GM12878 (cell line): ENCODE measurements at regions of chr4 and their contacts with region 1.

Region 1: GRCh38 chr4:147866532-147867271 is 134.8 kb downstream of the ARHGAP10 start:
- DNase-seq: peak; percentile 66
- ATAC-seq: peak; percentile 94
- H3K4me3 ChIP-seq: no peak overlapping the region
- H3K27ac ChIP-seq: no peak overlapping the region
- H3K4me1 ChIP-seq: 0 out of 2 replicates have a peak, but pooled peaks cover 2% of the 10 kb centered on the region
- H3K27me3 ChIP-seq: no peaks in the 10 kb centered on the region
- CTCF ChIP-seq: peak; percentile 92 to 100 (median 99); a peak in 5 of 6 replicates
- EP300 ChIP-seq: no peak
- POLR2A ChIP-seq: no peak
- RAD21 ChIP-seq: peak; percentile 100

Region 2: DNA sequence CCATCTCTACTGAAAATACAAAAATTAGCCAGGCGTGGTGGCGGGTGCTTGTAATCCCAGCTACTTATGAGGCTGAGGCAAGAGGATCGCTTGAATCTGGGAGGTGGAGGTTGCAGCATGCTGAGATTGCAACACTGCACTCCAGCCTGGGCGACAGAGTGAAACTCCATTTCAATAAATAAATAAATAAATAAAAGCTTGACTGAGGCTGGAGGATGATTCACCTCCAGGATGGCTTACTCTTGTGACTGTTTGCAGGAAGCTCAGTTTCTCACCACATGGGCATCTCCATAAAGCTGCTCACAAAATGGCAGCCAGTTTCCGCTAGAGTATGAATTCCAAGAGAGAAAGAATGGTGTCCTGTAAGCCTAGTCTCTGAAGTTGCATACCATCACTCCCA is 577.5 kb before region 1 on chr4:
- CTCF ChIA-PET with region 1: no interaction called
- POLR2A ChIA-PET with region 1: no interaction called
- RAD21 ChIA-PET with region 1: no interaction called
- SMC1A ChIA-PET with region 1: no interaction called
- in situ Hi-C with region 1: no loop called
- intact Hi-C with region 1: no loop called
- DNase-seq: no peak
- ATAC-seq: no peak
- H3K4me3 ChIP-seq: no peak overlapping the region
- H3K27ac ChIP-seq: no peak overlapping the region
- H3K4me1 ChIP-seq: no peaks in the 10 kb centered on the region
- H3K27me3 ChIP-seq: no peaks in the 10 kb centered on the region
- CTCF ChIP-seq: no peak
- EP300 ChIP-seq: no peak
- POLR2A ChIP-seq: no peak
- RAD21 ChIP-seq: no peak

Region 3: GRCh38 chr4:147617173-147617840 is 249.4 kb before region 1 on chr4 and contains the start of gene TMEM184C:
- CTCF ChIA-PET with region 1: interaction called, 64 read pairs
- POLR2A ChIA-PET with region 1: interaction called, 3 read pairs
- RAD21 ChIA-PET with region 1: interaction called, 40 read pairs
- SMC1A ChIA-PET with region 1: interaction called, 44 read pairs
- in situ Hi-C with region 1: no loop called
- intact Hi-C with region 1: loop called (anchors 1 kb)
- DNase-seq: peak; percentile 89
- ATAC-seq: peak; percentile 98
- H3K4me3 ChIP-seq: peak within 1 kb of the TSS; percentile 76
- H3K27ac ChIP-seq: peak within 1 kb of the TSS; percentile 90
- H3K4me1 ChIP-seq: no peaks in the 10 kb centered on the region
- H3K27me3 ChIP-seq: no peaks in the 10 kb centered on the region
- CTCF ChIP-seq: no peak
- EP300 ChIP-seq: peak in 1 of 2 experiments; percentile 14; a peak in 1 of 4 replicates
- POLR2A ChIP-seq: peak; percentile 93
- RAD21 ChIP-seq: no peak
- polyA plus RNA-seq, gene TMEM184C: 3.4 to 4.1 TPM

Region 4: DNA sequence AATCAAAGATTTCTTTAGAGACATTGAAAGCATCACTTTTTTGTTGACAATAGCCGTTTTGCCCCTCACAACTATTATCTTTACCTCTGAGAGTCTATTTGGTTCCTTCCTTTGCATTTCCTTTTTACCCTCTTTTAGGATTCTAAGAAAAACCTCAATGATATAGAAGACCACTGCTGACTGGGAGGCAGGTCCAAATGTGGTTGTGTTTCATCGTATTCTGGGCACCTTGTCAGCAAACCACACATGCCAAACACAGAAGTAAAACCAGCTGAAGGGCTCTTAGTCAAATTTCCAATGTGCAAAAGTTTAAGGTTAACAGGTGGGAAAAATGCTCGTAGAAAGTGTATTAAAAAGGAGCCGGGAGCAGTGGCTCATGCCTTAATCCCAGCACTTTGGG is 177.6 kb before region 1 on chr4:
- CTCF ChIA-PET with region 1: interaction called, 44 read pairs
- POLR2A ChIA-PET with region 1: interaction called, 4 read pairs
- RAD21 ChIA-PET with region 1: interaction called, 26 read pairs
- SMC1A ChIA-PET with region 1: interaction called, 28 read pairs
- in situ Hi-C with region 1: no loop called
- intact Hi-C with region 1: no loop called
- DNase-seq: no peak
- ATAC-seq: no peak
- H3K4me3 ChIP-seq: no peak overlapping the region
- H3K27ac ChIP-seq: no peak overlapping the region
- H3K4me1 ChIP-seq: peaks cover 3% of the 10 kb centered on the region
- H3K27me3 ChIP-seq: no peaks in the 10 kb centered on the region
- CTCF ChIP-seq: no peak
- EP300 ChIP-seq: no peak
- POLR2A ChIP-seq: no peak
- RAD21 ChIP-seq: no peak

Region 5: GRCh38 chr4:147741190-147741785 is 125.4 kb before region 1 on chr4:
- CTCF ChIA-PET with region 1: interaction called, 33 read pairs
- POLR2A ChIA-PET with region 1: no interaction called
- RAD21 ChIA-PET with region 1: interaction called, 12 read pairs
- SMC1A ChIA-PET with region 1: interaction called, 42 read pairs
- in situ Hi-C with region 1: no loop called
- intact Hi-C with region 1: no loop called
- DNase-seq: no peak
- ATAC-seq: peak; percentile 21
- H3K4me3 ChIP-seq: no peak overlapping the region
- H3K27ac ChIP-seq: no peak overlapping the region
- H3K4me1 ChIP-seq: peaks cover 7% of the 10 kb centered on the region
- H3K27me3 ChIP-seq: no peaks in the 10 kb centered on the region
- CTCF ChIP-seq: no peak
- EP300 ChIP-seq: no peak
- POLR2A ChIP-seq: no peak
- RAD21 ChIP-seq: no peak

Region 6: DNA sequence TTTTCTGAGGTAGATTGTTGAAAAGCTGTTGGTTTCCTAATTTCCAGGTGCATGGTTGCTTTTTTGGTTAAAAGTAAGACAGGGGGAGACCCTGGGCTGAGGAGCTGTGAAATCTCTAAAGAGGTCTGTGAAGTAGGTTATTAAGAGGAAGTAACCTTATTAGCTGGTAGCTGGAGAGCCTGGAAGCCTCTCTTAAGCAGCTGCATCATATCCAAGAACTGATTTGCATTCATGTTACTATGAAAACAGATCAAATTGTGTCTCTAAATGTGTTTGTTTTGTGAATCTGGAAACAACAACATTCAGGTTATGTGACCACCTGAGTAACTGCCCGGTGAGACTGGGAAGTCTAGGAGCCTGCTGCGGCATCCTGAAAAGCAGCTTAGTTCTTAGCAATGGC is 80.7 kb before region 1 on chr4:
- CTCF ChIA-PET with region 1: interaction called, 81 read pairs
- POLR2A ChIA-PET with region 1: no interaction called
- RAD21 ChIA-PET with region 1: interaction called, 21 read pairs
- SMC1A ChIA-PET with region 1: interaction called, 33 read pairs
- in situ Hi-C with region 1: no loop called
- intact Hi-C with region 1: no loop called
- DNase-seq: no peak
- ATAC-seq: peak; percentile 93
- H3K4me3 ChIP-seq: 0 out of 2 replicates have a peak overlapping the region, but pooled peaks have one; percentile 22
- H3K27ac ChIP-seq: peak overlapping the region; percentile 87
- H3K4me1 ChIP-seq: peaks cover 48% of the 10 kb centered on the region
- H3K27me3 ChIP-seq: no peaks in the 10 kb centered on the region
- CTCF ChIP-seq: no peak
- EP300 ChIP-seq: peak in 1 of 2 experiments; percentile 74; a peak in 1 of 4 replicates
- POLR2A ChIP-seq: no peak
- RAD21 ChIP-seq: no peak

Region 7: DNA sequence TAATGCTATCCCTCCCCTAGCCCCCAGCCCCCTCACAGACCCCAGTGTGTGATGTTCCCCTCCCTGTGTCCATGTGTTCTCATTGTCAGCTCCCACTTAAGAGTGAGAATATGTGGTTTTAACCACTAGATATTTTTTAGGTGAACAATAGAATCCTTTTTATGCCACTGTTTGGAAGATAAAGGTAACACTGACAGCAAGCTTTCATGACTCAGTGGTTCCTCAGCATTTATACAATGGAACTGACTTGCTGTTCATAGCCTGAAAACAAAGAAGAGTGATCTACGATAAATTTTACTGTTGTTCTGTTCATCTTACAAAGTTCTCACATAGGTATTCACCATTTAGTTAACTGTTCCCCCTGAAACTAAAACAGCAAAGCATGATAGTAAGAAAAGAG is 13.0 kb after region 1 on chr4:
- CTCF ChIA-PET with region 1: interaction called, 30 read pairs
- POLR2A ChIA-PET with region 1: no interaction called
- RAD21 ChIA-PET with region 1: interaction called, 19 read pairs
- SMC1A ChIA-PET with region 1: interaction called, 15 read pairs
- in situ Hi-C with region 1: no loop called
- intact Hi-C with region 1: no loop called
- DNase-seq: no peak
- ATAC-seq: no peak
- H3K4me3 ChIP-seq: no peak overlapping the region
- H3K27ac ChIP-seq: no peak overlapping the region
- H3K4me1 ChIP-seq: no peaks in the 10 kb centered on the region
- H3K27me3 ChIP-seq: no peaks in the 10 kb centered on the region
- CTCF ChIP-seq: no peak
- EP300 ChIP-seq: no peak
- POLR2A ChIP-seq: no peak
- RAD21 ChIP-seq: no peak